CD4-positive, alpha-beta memory T cell (primary cell): ENCODE measurements at regions of chr3 and their contacts with region 1.

Region 1: GRCh38 chr3:50627407-50628051 is 10.6 kb downstream of the MAPKAPK3 start:
- DNase-seq: no peak
- H3K4me3 ChIP-seq: no peak overlapping the region
- H3K4me3 Mint-ChIP-seq: peak overlapping the region in 3 of 8 donors; percentile 25 to 44 (median 29)
- H3K27ac ChIP-seq: no peak overlapping the region
- H3K27ac Mint-ChIP-seq: peak overlapping the region in 6 of 7 donors; percentile 8 to 88 (median 72)
- H3K4me1 ChIP-seq: peaks cover 100% of the 10 kb centered on the region
- H3K4me1 Mint-ChIP-seq: peaks cover 74 to 100% (median 88%) of the 10 kb centered on the region in 4 donors
- H3K27me3 ChIP-seq: no peaks in the 10 kb centered on the region
- H3K27me3 Mint-ChIP-seq: no peaks in the 10 kb centered on the region

Region 2: DNA sequence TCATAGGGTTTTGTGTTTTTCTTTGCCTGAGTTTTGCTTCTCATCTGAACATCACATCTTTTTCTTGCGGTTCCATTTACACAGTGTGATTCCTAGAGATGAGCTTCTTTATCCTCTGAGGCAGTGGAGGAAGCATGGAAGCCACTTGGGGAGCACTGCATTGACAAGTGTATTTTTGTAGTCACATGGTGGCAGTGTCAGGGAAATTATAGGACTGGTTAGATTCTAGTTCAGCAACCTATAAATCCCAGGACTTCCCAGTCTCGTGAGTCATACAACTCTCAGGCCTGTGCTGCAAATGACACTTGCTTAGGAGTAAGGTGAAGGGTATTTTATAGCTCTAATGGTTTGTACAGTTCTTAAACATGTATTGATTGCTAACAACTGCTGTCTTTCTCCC is 629.2 kb before region 1 on chr3:
- CTCF ChIA-PET with region 1: no interaction called
- POLR2A ChIA-PET with region 1: no interaction called
- intact Hi-C with region 1: no loop called
- DNase-seq: no peak
- H3K4me3 ChIP-seq: no peak overlapping the region
- H3K4me3 Mint-ChIP-seq: no peak overlapping the region
- H3K27ac ChIP-seq: no peak overlapping the region
- H3K27ac Mint-ChIP-seq: peak overlapping the region in 1 of 7 donors; percentile 16
- H3K4me1 ChIP-seq: no peaks in the 10 kb centered on the region
- H3K4me1 Mint-ChIP-seq: peaks cover 6 to 22% (median 9%) of the 10 kb centered on the region in 4 donors
- H3K27me3 ChIP-seq: no peaks in the 10 kb centered on the region
- H3K27me3 Mint-ChIP-seq: no peaks in the 10 kb centered on the region

Region 3: GRCh38 chr3:50616770-50617095 is 10.8 kb before region 1 on chr3:
- CTCF ChIA-PET with region 1: interaction called, 43 read pairs
- POLR2A ChIA-PET with region 1: interaction called, 43 read pairs
- intact Hi-C with region 1: no loop called
- DNase-seq: peak; percentile 94 to 96 (median 94)
- H3K4me3 ChIP-seq: peak overlapping the region; percentile 75
- H3K4me3 Mint-ChIP-seq: peak overlapping the region; percentile 82 to 95 (median 90)
- H3K27ac ChIP-seq: peak overlapping the region; percentile 89
- H3K27ac Mint-ChIP-seq: peak overlapping the region; percentile 90 to 99 (median 94)
- H3K4me1 ChIP-seq: peaks cover 80% of the 10 kb centered on the region
- H3K4me1 Mint-ChIP-seq: peaks cover 50 to 81% (median 66%) of the 10 kb centered on the region in 4 donors
- H3K27me3 ChIP-seq: no peaks in the 10 kb centered on the region
- H3K27me3 Mint-ChIP-seq: no peaks in the 10 kb centered on the region

Region 4: DNA sequence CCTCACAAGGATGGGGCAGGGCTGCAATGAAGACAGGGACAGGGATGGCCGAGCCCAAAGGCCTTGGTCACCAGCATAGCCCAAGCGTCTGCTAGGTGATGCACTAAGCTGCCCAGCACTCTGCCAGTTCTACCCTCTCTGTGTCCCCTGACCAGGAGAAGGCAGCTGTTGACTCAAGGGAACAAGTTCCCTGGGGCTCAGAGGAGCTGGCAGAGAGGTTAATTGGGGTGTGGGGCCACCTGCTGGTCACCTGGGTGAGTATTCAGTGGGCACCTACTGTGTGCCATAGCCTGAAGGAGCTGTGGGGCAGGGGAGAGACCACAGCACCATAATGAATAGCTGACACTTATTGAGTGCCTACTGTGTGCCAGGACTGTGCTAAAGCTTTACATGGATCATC is 25.2 kb after region 1 on chr3:
- CTCF ChIA-PET with region 1: interaction called, 375 read pairs
- POLR2A ChIA-PET with region 1: interaction called, 8 read pairs
- intact Hi-C with region 1: no loop called
- DNase-seq: peak in 4 of 5 donors; percentile 40 to 54 (median 50)
- H3K4me3 ChIP-seq: no peak overlapping the region
- H3K4me3 Mint-ChIP-seq: no peak overlapping the region
- H3K27ac ChIP-seq: no peak overlapping the region
- H3K27ac Mint-ChIP-seq: peak overlapping the region in 1 of 7 donors; percentile 76
- H3K4me1 ChIP-seq: no peaks in the 10 kb centered on the region
- H3K4me1 Mint-ChIP-seq: peaks cover 0 to 6% (median under 1%) of the 10 kb centered on the region in 4 donors
- H3K27me3 ChIP-seq: no peaks in the 10 kb centered on the region
- H3K27me3 Mint-ChIP-seq: no peaks in the 10 kb centered on the region